BJ (cell line): ENCODE measurements at regions of chr17 and their contacts with region 1.

Region 1: DNA sequence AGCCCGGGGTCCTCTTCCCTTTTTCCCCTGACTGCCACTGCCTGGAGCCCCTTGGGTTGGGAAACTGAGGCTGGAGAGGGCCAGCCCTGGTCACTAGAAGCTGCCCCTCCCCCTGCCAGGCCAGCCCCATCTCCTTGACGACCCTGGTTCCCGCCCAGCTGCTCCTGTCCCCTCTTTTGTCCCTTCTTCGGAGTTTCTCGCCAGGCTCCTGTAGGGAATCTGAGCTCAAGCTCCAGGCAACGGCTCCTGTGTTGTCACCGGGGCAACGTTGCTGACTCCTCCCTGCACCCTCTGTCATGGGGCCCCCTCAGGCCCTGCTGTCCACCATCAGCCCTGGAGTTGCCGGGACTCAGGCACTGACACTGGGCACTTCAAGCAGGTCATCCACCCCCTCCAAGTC is 5.7 kb downstream of the LLGL1 start:
- DNase-seq: no peak
- H3K4me3 ChIP-seq: no peak overlapping the region
- H3K27me3 ChIP-seq: no peaks in the 10 kb centered on the region
- CTCF ChIP-seq: no peak

Region 2: DNA sequence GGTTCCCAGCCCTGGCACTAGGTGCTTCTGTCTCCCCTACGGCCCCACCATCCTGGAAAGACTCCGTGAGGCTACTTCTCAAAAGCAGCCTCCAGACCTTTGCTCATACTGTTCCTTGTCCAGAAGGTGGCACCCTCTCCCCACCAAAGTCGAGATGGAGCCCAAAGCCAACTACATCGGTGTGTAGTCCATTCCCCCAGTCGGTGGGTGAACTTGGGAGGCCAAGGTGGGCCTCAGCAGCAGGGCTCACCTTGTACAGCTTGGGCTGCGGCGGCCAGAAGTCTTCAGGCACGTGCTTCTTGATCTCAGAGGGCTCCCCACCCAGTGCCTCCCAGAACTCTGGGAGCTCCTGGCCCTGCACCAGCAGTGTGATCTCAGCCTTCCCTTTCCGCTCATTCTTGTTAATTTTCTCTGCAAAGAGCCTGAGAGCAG is 17.2 kb after region 1 on chr17:
- CTCF ChIA-PET with region 1: interaction called, 20 read pairs
- POLR2A ChIA-PET with region 1: no interaction called
- DNase-seq: no peak
- H3K4me3 ChIP-seq: no peak overlapping the region
- H3K27me3 ChIP-seq: no peaks in the 10 kb centered on the region
- CTCF ChIP-seq: peak; percentile 79